Activated CD4-positive, alpha-beta T cell treated with anti-CD3 and anti-CD28 coated beads for 36 hours (primary cell): ENCODE measurements at regions of chr1 and their contacts with region 1.

Region 1: DNA sequence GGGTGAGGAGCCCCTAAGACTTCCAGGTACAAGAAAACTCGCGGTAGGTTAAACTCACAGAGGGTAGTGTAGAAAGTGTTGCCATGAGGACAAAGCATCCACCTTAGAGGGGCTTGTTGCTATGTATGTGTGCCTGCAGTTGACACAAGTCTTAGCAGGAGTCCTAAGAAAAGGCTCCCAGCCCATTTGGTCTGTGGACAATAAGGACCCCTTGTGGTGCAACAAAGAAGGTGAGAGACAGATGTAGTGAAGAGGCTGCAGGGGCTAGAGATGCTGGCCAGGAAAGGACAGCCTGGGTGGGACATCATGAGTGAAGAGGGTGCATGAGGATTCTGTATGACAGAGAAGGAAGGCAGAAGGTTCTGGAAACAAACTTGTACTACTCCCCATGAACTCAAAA is 36.3 kb upstream of the IL10 start:
- DNase-seq: peak; percentile 63
- ATAC-seq: peak; percentile 83
- H3K4me3 Mint-ChIP-seq: no peak overlapping the region
- H3K27ac Mint-ChIP-seq: no peak overlapping the region
- H3K4me1 Mint-ChIP-seq: peaks cover 39% of the 10 kb centered on the region
- H3K27me3 Mint-ChIP-seq: peaks cover 2% of the 10 kb centered on the region

Region 2: DNA sequence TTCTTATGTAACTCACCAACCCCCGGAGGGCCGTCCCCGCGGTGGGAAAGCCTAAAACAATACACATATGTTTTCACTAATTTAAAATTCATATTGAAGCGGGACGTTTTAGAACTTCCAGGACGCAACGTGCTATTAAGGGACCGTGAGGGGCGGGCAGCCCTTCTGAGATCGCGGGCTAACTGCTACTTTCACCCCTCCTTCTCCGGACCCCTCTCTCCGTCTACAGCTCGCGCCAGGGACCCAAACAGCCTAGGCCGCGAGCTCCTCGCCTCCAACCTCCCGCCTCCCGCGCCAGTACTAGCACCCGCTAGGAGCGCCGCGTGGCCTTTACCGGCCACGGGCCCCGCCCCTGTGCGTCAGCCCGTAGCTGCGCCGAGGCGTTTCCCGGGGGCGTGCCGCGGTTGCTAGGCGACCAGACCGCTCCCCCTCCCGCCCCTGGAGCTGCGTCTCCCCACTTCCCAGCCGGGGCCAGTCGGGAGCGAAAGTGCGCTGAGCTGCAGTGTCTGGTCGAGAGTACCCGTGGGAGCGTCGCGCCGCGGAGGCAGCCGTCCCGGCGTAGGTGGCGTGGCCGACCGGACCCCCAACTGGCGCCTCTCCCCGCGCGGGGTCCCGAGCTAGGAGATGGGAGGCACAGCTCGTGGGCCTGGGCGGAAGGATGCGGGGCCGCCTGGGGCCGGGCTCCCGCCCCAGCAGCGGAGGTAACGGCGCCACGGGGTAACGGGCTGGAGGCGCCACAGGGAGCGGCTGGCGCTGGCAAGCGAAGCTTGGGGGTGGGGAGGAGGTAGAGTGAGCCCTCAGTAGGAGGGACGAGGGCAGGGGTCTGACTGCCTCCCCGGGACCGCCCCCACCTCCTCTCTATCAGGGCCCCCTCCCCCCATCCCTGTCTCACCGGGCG is 173.3 kb before region 1 on chr1 and contains the start of gene DYRK3:
- CTCF ChIA-PET with region 1: interaction called, 7 read pairs
- POLR2A ChIA-PET with region 1: no interaction called
- intact Hi-C with region 1: loop called (anchors 2 to 5 kb)
- DNase-seq: peak; percentile 97
- ATAC-seq: peak; percentile 93
- H3K4me3 Mint-ChIP-seq: peak within 1 kb of the TSS; percentile 76
- H3K27ac Mint-ChIP-seq: peak within 1 kb of the TSS; percentile 87
- H3K4me1 Mint-ChIP-seq: peaks cover 27% of the 10 kb centered on the region
- H3K27me3 Mint-ChIP-seq: peaks cover 7% of the 10 kb centered on the region
- total RNA-seq, gene DYRK3: 8.3 to 8.7 TPM

Region 3: DNA sequence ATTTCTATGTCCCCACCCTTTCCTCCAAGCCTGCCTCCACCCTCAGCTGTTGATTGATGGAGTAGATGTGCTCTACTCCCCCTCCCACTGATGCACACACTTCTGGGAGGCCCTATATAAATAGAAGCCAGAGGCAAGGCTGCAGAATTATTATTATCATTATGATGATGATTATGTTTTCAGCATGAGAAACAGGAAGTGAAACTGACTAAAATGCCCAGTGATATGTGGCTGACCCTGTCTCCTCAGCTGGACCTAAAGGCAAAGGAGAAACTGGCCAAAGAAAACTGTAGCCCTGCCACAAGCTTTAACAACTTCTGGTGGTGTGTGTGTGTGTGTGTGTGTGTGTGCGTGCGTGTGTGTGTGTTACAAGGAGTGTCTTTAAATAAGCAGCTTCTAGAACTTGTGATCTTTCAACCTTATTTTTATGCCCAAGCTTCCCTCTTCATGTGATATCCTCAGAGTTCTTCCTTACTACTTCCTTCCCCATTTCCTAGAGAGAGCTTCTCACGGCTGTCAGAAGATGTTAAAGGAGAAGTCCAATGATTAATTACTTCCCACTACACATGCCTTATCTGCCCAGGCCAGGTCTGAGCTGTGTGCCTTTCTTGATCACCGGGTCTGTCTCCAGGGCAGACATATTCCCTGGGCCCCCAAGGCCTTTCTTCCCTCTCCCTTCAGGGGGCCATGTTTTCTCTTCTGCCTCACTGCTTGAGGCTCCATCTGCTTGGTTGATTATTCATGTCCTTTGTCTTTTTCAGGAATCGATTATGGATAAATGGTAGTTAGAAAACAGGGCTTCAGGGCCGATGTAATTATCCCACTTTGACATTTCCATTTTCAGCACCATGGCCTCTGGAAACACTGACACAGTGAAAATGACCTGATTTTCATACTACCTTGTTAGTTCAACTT is 135.5 kb before region 1 on chr1:
- CTCF ChIA-PET with region 1: no interaction called
- POLR2A ChIA-PET with region 1: no interaction called
- intact Hi-C with region 1: no loop called
- DNase-seq: no peak
- ATAC-seq: no peak
- H3K4me3 Mint-ChIP-seq: no peak overlapping the region
- H3K27ac Mint-ChIP-seq: no peak overlapping the region
- H3K4me1 Mint-ChIP-seq: peaks cover 6% of the 10 kb centered on the region
- H3K27me3 Mint-ChIP-seq: peaks cover 6% of the 10 kb centered on the region

Region 4: DNA sequence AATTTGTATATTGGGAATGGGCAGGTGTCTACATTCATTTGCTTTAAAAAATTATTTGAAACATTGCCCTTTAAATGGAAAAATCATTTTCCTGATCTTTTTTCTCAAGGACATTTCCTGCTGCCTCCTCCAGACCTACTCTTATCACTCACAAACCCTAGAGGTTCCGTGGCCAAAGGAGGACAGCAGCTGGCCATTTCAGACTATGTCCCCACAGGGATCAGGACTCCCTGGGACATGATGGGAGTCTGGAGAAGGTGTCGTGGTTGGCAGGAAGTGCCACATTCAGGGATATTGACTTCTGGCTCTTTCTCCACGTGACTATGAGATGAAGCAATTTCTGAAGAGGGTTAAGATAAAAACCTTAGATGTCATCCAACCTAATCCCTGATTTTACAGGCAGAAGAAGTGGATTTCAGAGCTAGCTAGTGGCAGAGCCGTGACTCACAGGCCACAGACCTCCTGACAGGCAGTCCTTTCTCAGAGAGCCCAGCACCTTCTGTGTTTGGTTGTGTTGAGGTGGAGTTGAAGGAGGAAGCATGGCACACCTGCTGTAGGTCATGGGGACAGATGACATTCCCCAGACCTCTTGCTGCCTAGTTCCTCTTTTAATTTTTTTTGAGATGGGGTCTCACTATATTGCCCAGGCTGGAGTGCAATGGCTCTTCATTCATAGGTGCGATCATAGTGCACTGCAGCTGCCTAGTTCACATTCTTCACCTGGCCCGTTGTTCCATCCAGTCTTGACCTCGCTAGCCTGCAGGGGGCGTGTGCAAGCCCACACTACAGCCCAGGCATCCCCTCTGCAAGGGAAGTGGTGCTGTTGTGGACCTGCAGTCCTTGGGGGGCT is 10.9 kb before region 1 on chr1:
- CTCF ChIA-PET with region 1: interaction called, 11 read pairs
- POLR2A ChIA-PET with region 1: interaction called, 7 read pairs
- intact Hi-C with region 1: loop called in 1 of 2 experiments (anchors 1 kb)
- DNase-seq: peak; percentile 50
- ATAC-seq: peak; percentile 20
- H3K4me3 Mint-ChIP-seq: no peak overlapping the region
- H3K27ac Mint-ChIP-seq: no peak overlapping the region
- H3K4me1 Mint-ChIP-seq: peaks cover 64% of the 10 kb centered on the region
- H3K27me3 Mint-ChIP-seq: peaks cover 19% of the 10 kb centered on the region

Region 5: DNA sequence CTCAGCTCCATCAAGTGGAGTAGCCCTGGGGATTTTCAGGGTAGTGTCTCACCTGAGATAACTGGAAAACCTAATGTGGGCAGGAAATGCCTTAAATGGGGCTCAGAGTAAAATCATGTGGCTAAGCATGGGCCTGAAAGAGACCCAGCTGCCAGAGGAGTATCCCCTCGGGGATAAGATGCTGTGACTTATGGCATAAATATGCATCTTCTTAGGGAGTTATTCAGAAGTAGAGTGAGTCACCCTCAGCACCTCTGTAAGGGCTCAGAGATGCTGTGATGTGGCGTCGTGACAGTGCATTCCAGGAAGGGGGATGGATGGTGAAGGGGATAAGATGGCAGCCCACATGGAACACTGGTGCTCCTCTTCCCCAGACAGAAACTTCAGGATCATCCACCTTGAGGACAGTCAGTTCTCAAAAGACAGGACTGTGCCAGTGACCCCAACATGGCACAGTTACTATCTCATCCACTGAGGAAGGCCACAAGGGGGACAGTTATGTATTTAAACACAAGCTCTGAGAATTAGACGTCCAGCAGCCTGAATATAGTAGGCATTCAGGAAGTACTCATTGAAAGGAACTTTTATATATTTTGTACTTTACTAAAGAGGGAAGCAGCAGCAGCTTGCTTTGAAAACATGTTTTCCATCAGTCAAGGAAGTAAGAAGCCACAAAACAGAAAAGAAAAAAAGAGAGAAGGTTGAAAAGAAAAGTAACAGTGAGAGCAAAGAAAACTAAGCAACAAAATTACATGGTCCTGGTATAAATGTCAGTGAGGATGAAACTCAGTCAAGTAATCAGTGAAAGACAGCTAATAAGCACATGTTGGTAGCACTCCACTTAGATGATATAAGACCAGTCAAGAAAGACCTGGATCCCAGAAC is 96.9 kb after region 1 on chr1:
- CTCF ChIA-PET with region 1: interaction called, 18 read pairs
- POLR2A ChIA-PET with region 1: no interaction called
- intact Hi-C with region 1: loop called in 1 of 2 experiments (anchors 2 kb)
- DNase-seq: peak; percentile 76
- ATAC-seq: peak; percentile 93
- H3K4me3 Mint-ChIP-seq: peak overlapping the region; percentile 27
- H3K27ac Mint-ChIP-seq: peak overlapping the region; percentile 87
- H3K4me1 Mint-ChIP-seq: peaks cover 86% of the 10 kb centered on the region
- H3K27me3 Mint-ChIP-seq: no peaks in the 10 kb centered on the region

Region 6: GRCh38 chr1:207218512-207219362 is 410.1 kb after region 1 on chr1:
- CTCF ChIA-PET with region 1: no interaction called
- POLR2A ChIA-PET with region 1: no interaction called
- intact Hi-C with region 1: no loop called
- DNase-seq: no peak
- ATAC-seq: no peak
- H3K4me3 Mint-ChIP-seq: no peak overlapping the region
- H3K27ac Mint-ChIP-seq: no peak overlapping the region
- H3K4me1 Mint-ChIP-seq: peaks cover 3% of the 10 kb centered on the region
- H3K27me3 Mint-ChIP-seq: no peaks in the 10 kb centered on the region